GM12878 (cell line): ENCODE measurements at regions of chr3 and their contacts with region 1.

Region 1: GRCh38 chr3:122621112-122621511 is 43.7 kb downstream of the PARP15 start:
- DNase-seq: peak; percentile 66
- ATAC-seq: peak; percentile 63
- H3K4me3 ChIP-seq: peak overlapping the region; percentile 39; the same call in 1 of the 2 replicates
- H3K27ac ChIP-seq: peak overlapping the region; percentile 47; the same call in 1 of the 2 replicates
- H3K4me1 ChIP-seq: peaks cover 24% of the 10 kb centered on the region
- H3K27me3 ChIP-seq: no peaks in the 10 kb centered on the region
- CTCF ChIP-seq: no peak
- EP300 ChIP-seq: peak; percentile 55 to 64; a peak in 2 of 4 replicates
- POLR2A ChIP-seq: no peak
- RAD21 ChIP-seq: no peak

Region 2: DNA sequence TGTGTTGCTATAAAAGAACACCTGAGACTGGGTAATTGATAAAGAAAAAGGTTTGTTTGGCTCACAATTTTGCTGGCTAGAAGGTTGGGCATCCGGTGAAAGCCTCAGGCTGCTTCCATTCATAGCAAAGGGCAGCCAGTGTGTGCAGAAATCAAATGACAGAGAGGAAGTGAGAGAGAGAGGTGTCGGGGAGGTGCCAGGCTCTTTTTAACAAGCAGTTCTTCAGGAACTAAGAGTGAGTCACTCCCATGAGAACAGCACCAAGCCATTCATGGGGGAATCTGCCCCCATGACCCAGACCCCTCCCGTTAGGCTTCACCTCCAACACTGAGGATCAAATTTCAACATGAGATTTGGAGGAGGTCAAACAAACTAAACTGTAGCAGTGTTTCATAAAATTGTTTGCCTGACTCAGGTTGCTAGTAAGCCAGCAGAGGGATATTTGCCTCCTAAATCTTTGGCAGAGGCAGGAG is 48.1 kb before region 1 on chr3:
- CTCF ChIA-PET with region 1: interaction called, 47 read pairs
- POLR2A ChIA-PET with region 1: interaction called, 44 read pairs
- RAD21 ChIA-PET with region 1: interaction called, 130 read pairs
- SMC1A ChIA-PET with region 1: interaction called, 183 read pairs
- in situ Hi-C with region 1: no loop called
- intact Hi-C with region 1: loop called (anchors 1 kb)
- DNase-seq: peak; percentile 77
- ATAC-seq: peak; percentile 47
- H3K4me3 ChIP-seq: no peak overlapping the region
- H3K27ac ChIP-seq: peak overlapping the region; percentile 59
- H3K4me1 ChIP-seq: peaks cover 29% of the 10 kb centered on the region
- H3K27me3 ChIP-seq: no peaks in the 10 kb centered on the region
- CTCF ChIP-seq: no peak
- EP300 ChIP-seq: peak; percentile 61 to 68; a peak in 2 of 4 replicates
- POLR2A ChIP-seq: no peak
- RAD21 ChIP-seq: no peak

Region 3: GRCh38 chr3:122589297-122589696 is 31.8 kb before region 1 on chr3:
- CTCF ChIA-PET with region 1: interaction called, 4 read pairs
- POLR2A ChIA-PET with region 1: interaction called, 14 read pairs
- RAD21 ChIA-PET with region 1: interaction called, 7 read pairs
- SMC1A ChIA-PET with region 1: interaction called, 23 read pairs
- in situ Hi-C with region 1: no loop called
- intact Hi-C with region 1: no loop called
- DNase-seq: peak; percentile 59
- ATAC-seq: peak; percentile 88
- H3K4me3 ChIP-seq: no peak overlapping the region
- H3K27ac ChIP-seq: no peak overlapping the region; the same call in none of the 2 replicates
- H3K4me1 ChIP-seq: peaks cover 4% of the 10 kb centered on the region; the same call in 1 of the 2 replicates
- H3K27me3 ChIP-seq: no peaks in the 10 kb centered on the region
- CTCF ChIP-seq: no peak
- EP300 ChIP-seq: peak in 1 of 2 experiments; percentile 73; a peak in 2 of 4 replicates
- POLR2A ChIP-seq: no peak
- RAD21 ChIP-seq: no peak

Region 4: GRCh38 chr3:122609798-122610559 is 11.1 kb before region 1 on chr3:
- CTCF ChIA-PET with region 1: interaction called, 3 read pairs
- POLR2A ChIA-PET with region 1: interaction called, 6 read pairs
- RAD21 ChIA-PET with region 1: interaction called, 29 read pairs
- SMC1A ChIA-PET with region 1: interaction called, 12 read pairs
- in situ Hi-C with region 1: no loop called
- intact Hi-C with region 1: loop called (anchors 2 kb)
- DNase-seq: peak; percentile 98
- ATAC-seq: peak; percentile 96
- H3K4me3 ChIP-seq: no peak overlapping the region
- H3K27ac ChIP-seq: peak overlapping the region; percentile 75
- H3K4me1 ChIP-seq: peaks cover 22% of the 10 kb centered on the region
- H3K27me3 ChIP-seq: no peaks in the 10 kb centered on the region
- CTCF ChIP-seq: no peak
- EP300 ChIP-seq: peak; percentile 91 to 99
- POLR2A ChIP-seq: no peak
- RAD21 ChIP-seq: no peak; the same call in 1 of the 2 replicates

Region 5: DNA sequence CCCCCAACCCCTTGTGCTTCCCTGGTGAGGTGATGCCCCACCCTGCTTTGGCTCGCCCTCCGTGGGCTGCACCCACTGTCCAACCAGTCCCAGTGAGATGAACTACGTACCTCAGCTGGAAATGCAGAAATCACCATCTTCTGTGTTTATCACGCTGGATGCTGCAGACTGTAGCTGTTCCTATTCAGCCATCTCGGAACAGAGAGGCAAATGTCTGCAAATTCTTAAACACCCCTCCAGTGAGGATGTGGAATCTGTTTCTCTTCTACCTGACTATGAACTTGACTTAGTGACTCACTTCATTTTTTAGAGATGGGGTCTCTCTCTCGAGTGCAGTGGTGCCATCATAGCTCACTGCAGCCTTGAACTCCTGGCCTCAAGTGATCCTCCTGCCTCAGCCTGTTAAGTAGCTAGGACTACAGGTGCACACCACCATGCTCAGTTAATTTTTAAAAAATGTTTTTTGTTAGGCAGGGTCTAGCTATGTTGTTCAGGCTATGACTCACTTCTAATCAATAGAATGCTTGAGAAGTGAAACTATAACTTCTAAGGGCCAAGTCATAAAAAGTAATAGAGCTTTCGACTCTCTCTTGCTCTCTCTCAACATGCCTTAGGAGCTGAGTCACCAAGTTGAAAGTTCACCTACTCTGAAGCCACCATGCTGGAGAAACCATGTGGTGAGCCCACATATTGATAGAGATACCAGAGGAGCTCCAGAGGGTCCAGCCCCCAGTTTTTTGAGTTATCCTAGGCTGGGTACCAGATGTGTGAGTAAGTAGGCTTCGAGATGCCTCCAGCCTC is 48.0 kb after region 1 on chr3:
- CTCF ChIA-PET with region 1: interaction called, 4 read pairs
- POLR2A ChIA-PET with region 1: interaction called, 7 read pairs
- RAD21 ChIA-PET with region 1: interaction called, 6 read pairs
- SMC1A ChIA-PET with region 1: interaction called, 12 read pairs
- in situ Hi-C with region 1: no loop called
- intact Hi-C with region 1: no loop called
- DNase-seq: no peak
- ATAC-seq: peak; percentile 97
- H3K4me3 ChIP-seq: no peak overlapping the region
- H3K27ac ChIP-seq: peak overlapping the region; percentile 41; the same call in 1 of the 2 replicates
- H3K4me1 ChIP-seq: peaks cover 12% of the 10 kb centered on the region
- H3K27me3 ChIP-seq: no peaks in the 10 kb centered on the region
- CTCF ChIP-seq: no peak
- EP300 ChIP-seq: no peak
- POLR2A ChIP-seq: no peak
- RAD21 ChIP-seq: no peak